ENCODE measurements at regions of chr6 and their contacts with region 1.

Region 1: GRCh38 chr6:157314705-157315321 is 8.5 kb downstream of the TMEM242 start:
- DNase-seq: peak; percentile 59
- ATAC-seq: peak; percentile 85
- H3K4me3 ChIP-seq: no peak overlapping the region
- H3K27ac ChIP-seq: no peak overlapping the region
- H3K4me1 ChIP-seq: peaks cover 9% of the 10 kb centered on the region
- H3K27me3 ChIP-seq: no peaks in the 10 kb centered on the region
- CTCF ChIP-seq: peak; percentile 91; the same call in 1 of the 2 replicates

Region 2: GRCh38 chr6:157333537-157333936 is 18.7 kb after region 1 on chr6:
- CTCF ChIA-PET with region 1: interaction called, 10 read pairs
- POLR2A ChIA-PET with region 1: no interaction called
- in situ Hi-C with region 1: no loop called
- intact Hi-C with region 1: no loop called
- DNase-seq: no peak
- ATAC-seq: no peak
- H3K4me3 ChIP-seq: no peak overlapping the region
- H3K27ac ChIP-seq: no peak overlapping the region
- H3K4me1 ChIP-seq: peaks cover 6% of the 10 kb centered on the region; the same call in 1 of the 2 replicates
- H3K27me3 ChIP-seq: no peaks in the 10 kb centered on the region
- CTCF ChIP-seq: no peak

Region 3: DNA sequence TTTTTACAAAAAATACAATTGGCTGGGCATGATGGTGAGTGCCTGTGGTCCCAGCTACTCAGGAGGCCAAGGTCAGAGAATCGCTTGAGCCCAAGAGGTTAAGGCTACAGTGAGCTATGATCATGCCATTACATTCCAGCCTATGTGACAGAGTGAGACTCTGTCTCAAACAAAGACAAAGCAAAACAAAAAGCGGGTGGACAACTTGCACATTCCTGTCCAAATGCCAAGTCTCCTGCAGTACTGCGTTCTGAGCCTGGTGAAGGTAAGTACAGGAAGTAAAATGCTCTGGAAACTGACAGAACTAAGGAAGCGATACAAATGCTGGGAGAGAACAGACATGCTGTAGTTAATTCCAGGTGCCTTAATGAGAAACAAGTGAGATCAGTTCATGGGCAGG is 28.9 kb after region 1 on chr6:
- CTCF ChIA-PET with region 1: no interaction called
- POLR2A ChIA-PET with region 1: no interaction called
- in situ Hi-C with region 1: no loop called
- intact Hi-C with region 1: no loop called
- DNase-seq: no peak
- ATAC-seq: 0 out of 2 replicates have a peak, but pooled peaks have one; percentile 38
- H3K4me3 ChIP-seq: no peak overlapping the region
- H3K27ac ChIP-seq: no peak overlapping the region
- H3K4me1 ChIP-seq: no peaks in the 10 kb centered on the region
- H3K27me3 ChIP-seq: peaks cover 14% of the 10 kb centered on the region; the same call in 1 of the 2 replicates
- CTCF ChIP-seq: no peak

Region 4: GRCh38 chr6:157597446-157598312 is 282.9 kb after region 1 on chr6:
- CTCF ChIA-PET with region 1: no interaction called
- POLR2A ChIA-PET with region 1: no interaction called
- in situ Hi-C with region 1: no loop called
- intact Hi-C with region 1: loop called (anchors 2 kb)
- DNase-seq: no peak
- ATAC-seq: peak; percentile 87
- H3K4me3 ChIP-seq: no peak overlapping the region
- H3K27ac ChIP-seq: no peak overlapping the region
- H3K4me1 ChIP-seq: no peaks in the 10 kb centered on the region
- H3K27me3 ChIP-seq: no peaks in the 10 kb centered on the region
- CTCF ChIP-seq: peak; percentile 84